Naive thymus-derived CD4-positive, alpha-beta T cell (primary cell): ENCODE measurements at regions of chr20 and their contacts with region 1.

Region 1: GRCh38 chr20:22339091-22339881 is 245.1 kb downstream of the FOXA2 start:
- DNase-seq: peak in 6 of 9 donors; percentile 13 to 27 (median 18)
- ATAC-seq: no peak
- H3K4me3 ChIP-seq: no peak overlapping the region
- H3K4me3 Mint-ChIP-seq: peak overlapping the region in 6 of 10 donors; percentile 8 to 70 (median 54)
- H3K27ac ChIP-seq: no peak overlapping the region
- H3K27ac Mint-ChIP-seq: no peak overlapping the region
- H3K4me1 ChIP-seq: no peaks in the 10 kb centered on the region
- H3K4me1 Mint-ChIP-seq: peaks cover 2 to 7% (median 6%) of the 10 kb centered on the region in 7 donors
- H3K27me3 ChIP-seq: no peaks in the 10 kb centered on the region
- H3K27me3 Mint-ChIP-seq: peaks cover 4 to 15% (median 8%) of the 10 kb centered on the region in 5 donors

Region 2: GRCh38 chr20:22324505-22324904 is 14.8 kb before region 1 on chr20:
- CTCF ChIA-PET with region 1: no interaction called
- POLR2A ChIA-PET with region 1: no interaction called
- intact Hi-C with region 1: no loop called
- DNase-seq: no peak
- ATAC-seq: no peak
- H3K4me3 ChIP-seq: no peak overlapping the region
- H3K4me3 Mint-ChIP-seq: no peak overlapping the region
- H3K27ac ChIP-seq: no peak overlapping the region
- H3K27ac Mint-ChIP-seq: no peak overlapping the region
- H3K4me1 ChIP-seq: no peaks in the 10 kb centered on the region
- H3K4me1 Mint-ChIP-seq: no peaks in the 10 kb centered on the region
- H3K27me3 ChIP-seq: no peaks in the 10 kb centered on the region
- H3K27me3 Mint-ChIP-seq: peaks cover 0 to 5% (median 0%) of the 10 kb centered on the region in 5 donors

Region 3: GRCh38 chr20:22586645-22587310 is 247.5 kb after region 1 on chr20:
- CTCF ChIA-PET with region 1: no interaction called
- POLR2A ChIA-PET with region 1: no interaction called
- intact Hi-C with region 1: loop called in 1 of 2 experiments (anchors 1 kb)
- DNase-seq: no peak
- ATAC-seq: no peak
- H3K4me3 ChIP-seq: no peak overlapping the region
- H3K4me3 Mint-ChIP-seq: no peak overlapping the region
- H3K27ac ChIP-seq: no peak overlapping the region
- H3K27ac Mint-ChIP-seq: no peak overlapping the region
- H3K4me1 ChIP-seq: no peaks in the 10 kb centered on the region
- H3K4me1 Mint-ChIP-seq: peaks cover 0 to 4% (median 0%) of the 10 kb centered on the region in 7 donors
- H3K27me3 ChIP-seq: no peaks in the 10 kb centered on the region
- H3K27me3 Mint-ChIP-seq: peaks cover 41 to 70% (median 50%) of the 10 kb centered on the region in 5 donors

Region 4: DNA sequence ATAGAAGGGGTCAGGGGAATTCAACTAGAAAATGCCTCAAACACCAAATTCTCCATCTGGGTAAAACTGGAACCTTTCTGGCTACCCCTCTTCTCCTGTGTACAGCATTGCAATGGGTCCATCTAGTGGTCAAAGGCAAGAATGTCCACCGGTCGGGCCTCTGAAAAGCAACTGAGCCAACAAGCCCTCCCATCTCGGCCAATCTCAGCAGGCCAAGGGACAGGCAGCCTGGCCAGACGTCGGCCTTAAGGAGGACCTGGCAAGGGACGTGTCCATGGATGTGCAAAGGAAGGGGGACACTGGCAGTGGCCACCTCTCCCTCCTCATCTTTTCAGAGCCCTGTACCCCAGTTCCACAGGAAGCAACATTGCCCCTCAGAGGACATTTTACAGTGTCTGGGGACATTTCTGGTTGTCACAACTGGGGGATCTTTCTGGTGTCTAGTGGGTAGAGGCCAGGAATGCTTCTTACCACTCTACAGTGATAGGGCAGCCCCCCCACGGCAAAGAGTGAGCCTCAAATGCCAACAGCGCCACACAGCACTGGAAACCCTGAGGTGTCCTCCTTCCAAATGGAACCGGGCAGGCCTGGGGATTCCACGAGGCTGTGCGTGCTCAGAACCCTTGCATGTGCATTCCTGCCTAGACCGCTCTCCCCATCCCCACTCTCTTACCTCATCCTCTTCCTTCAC is 344.9 kb after region 1 on chr20:
- CTCF ChIA-PET with region 1: no interaction called
- POLR2A ChIA-PET with region 1: no interaction called
- intact Hi-C with region 1: loop called in 1 of 2 experiments (anchors 1 kb)
- DNase-seq: peak in 3 of 9 donors; percentile 9 to 28 (median 10)
- ATAC-seq: peak; percentile 56
- H3K4me3 ChIP-seq: no peak overlapping the region
- H3K4me3 Mint-ChIP-seq: no peak overlapping the region
- H3K27ac ChIP-seq: no peak overlapping the region
- H3K27ac Mint-ChIP-seq: no peak overlapping the region
- H3K4me1 ChIP-seq: no peaks in the 10 kb centered on the region
- H3K4me1 Mint-ChIP-seq: peaks cover 0 to 3% (median 0%) of the 10 kb centered on the region in 7 donors
- H3K27me3 ChIP-seq: no peaks in the 10 kb centered on the region
- H3K27me3 Mint-ChIP-seq: peaks cover 0 to 24% (median 5%) of the 10 kb centered on the region in 5 donors